Activated CD4-positive, alpha-beta T cell treated with anti-CD3 and anti-CD28 coated beads, Interleukin-2, amount 10 ng/mL, durations not matched to agents 24 days and 14 days (primary cell): ENCODE measurements at regions of chr22 and their contacts with region 1.

Region 1: DNA sequence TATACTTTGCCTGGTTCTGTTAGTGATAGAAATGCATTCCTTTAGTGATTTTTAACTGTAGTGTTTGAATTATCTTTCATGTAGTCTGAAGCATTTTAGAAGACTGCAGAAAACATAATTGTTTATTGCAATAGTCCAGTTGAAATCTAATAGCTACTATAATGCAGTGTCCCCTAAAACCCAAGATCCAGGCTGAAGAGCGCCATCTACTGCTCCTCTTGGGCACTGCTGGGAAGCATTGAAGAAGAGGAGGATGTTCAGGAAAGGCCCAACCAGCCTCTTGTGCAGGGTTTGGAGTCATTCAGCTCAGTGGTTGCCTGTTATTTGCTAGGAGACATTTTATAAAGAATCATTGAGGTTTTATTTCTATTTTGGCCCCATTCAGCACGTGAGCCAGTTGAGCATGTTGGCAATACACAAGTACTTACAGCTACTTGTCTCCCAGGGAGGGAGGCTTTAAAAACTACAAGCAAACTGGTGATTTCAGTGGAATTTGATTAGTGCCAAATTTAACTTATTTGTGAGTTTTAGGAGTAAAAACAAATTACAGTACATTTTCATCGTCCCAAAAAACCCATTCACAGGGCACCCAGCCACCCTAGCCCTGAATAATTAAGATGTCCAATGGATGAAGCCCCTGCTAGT is 74.9 kb upstream of the HORMAD2 start:
- DNase-seq: peak; percentile 90
- H3K4me3 Mint-ChIP-seq: no peak overlapping the region
- H3K27ac Mint-ChIP-seq: no peak overlapping the region
- H3K4me1 Mint-ChIP-seq: peaks cover 10% of the 10 kb centered on the region
- H3K27me3 Mint-ChIP-seq: no peaks in the 10 kb centered on the region

Region 2: DNA sequence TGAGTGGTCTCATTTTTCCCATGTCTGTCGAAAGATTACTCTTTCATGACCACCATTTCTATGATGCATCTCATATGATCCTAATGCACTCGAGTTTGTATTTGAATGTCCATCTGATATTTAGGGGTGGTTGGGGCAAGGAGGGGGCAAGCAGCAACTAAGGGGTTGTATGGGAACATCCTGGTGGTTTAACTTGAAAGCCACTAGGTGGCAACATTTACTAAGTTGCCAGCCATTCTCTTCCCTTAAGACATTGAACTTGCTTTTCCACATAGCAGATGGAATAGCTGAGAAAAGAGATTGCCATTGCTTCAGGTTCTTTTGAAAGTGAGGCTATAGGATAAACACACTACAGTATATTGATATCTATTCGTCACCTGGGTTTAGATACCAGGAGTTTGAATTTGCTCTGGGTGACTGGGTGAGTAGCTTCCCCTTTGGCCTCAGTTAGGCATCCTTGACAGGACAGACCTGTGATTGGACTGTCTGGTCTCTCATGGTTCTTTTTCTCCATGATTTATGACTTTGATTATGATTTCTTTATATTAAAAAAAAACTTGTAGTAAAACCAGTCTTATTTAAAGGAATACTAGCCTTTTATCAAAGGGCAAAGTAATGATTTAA is 369.5 kb before region 1 on chr22:
- intact Hi-C with region 1: loop called (anchors 5 kb)
- DNase-seq: peak; percentile 65
- H3K4me3 Mint-ChIP-seq: no peak overlapping the region
- H3K27ac Mint-ChIP-seq: no peak overlapping the region
- H3K4me1 Mint-ChIP-seq: peaks cover 28% of the 10 kb centered on the region
- H3K27me3 Mint-ChIP-seq: no peaks in the 10 kb centered on the region

Region 3: DNA sequence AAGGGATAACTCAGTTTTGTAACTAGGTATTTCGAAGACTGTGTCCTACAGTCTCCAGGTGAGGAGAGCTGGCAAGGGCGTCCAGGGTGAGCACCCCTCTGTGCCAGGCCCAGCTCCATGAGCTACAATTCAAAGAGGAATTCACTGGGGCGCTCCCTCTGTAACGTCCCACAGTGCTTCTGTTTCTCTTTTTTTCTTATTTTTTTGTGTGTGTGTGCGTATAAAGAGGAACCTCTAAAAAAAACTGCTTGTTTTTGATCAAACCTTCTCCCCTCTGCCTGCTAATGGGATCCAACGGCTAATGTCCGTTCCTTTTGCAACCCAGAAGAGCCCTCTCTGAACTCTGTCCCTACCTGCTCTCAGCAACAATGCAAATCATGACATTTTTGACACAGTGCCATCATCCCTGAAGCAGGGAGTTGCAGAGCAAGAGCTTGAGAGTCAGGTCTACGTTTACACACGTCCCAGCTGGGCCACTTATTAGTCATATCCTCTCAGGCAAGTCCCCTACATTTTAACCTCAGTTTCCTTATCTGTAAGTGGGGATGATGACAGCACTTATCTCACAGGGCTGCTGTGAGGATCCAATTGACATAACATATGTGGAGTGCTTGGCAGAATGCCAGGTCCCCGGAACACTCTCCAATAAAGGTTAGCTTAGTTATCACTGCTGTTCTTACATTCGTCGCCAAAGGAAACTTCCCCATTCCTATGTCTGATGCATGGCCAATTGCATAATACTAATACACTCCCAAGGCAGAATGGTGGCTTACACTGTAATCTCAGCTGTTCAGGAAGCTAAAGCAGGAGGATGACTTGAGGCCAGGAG is 184.2 kb before region 1 on chr22:
- intact Hi-C with region 1: loop called (anchors 5 kb)
- DNase-seq: peak; percentile 78
- H3K4me3 Mint-ChIP-seq: no peak overlapping the region
- H3K27ac Mint-ChIP-seq: peak overlapping the region; percentile 79
- H3K4me1 Mint-ChIP-seq: peaks cover 12% of the 10 kb centered on the region
- H3K27me3 Mint-ChIP-seq: no peaks in the 10 kb centered on the region

Region 4: DNA sequence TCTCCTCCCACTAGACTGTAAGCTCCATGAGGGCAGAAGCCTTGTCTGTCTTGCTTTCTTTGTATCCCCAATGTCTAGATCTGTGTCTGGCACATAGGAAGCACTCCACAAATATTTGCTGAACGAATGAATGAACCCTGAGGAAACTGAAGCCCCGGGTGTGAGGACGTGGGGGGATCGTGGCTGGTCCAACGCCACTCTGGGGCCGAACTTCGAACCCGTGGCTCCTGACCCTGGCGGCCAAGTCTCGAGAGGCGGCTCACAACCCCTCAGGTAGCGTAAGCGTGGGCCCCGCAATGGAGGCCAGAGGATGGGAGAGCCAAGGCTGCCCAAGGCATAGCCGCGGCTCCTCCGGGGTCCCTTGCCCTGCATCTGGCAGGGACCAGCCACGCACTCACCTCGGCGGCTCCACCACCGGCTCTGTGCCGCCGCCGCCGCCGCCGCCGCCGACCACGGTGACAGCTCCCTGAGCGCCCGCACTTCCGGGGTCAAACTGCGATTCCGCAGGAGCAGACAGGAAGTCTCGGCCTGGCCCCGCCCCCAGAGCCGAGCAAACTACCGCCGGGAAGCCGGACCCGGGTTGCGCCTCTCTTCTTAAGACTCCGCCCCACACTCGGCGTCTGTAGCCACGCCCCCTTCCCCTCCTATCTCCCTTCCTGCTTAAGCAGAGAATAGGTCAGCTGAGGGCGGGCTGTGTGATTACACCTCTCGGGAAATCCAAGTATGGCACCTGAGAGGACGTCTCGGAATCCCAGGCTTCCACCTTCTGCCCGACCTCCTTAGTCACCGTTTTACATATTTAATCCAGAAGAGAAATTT is 167.3 kb before region 1 on chr22 and contains the start of gene ASCC2:
- intact Hi-C with region 1: loop called (anchors 5 kb)
- DNase-seq: peak; percentile 100
- H3K4me3 Mint-ChIP-seq: peak within 1 kb of the TSS; percentile 99
- H3K27ac Mint-ChIP-seq: peak within 1 kb of the TSS; percentile 90
- H3K4me1 Mint-ChIP-seq: peaks cover 31% of the 10 kb centered on the region
- H3K27me3 Mint-ChIP-seq: no peaks in the 10 kb centered on the region
- total RNA-seq, gene ASCC2: 78.5 and 81.3 TPM in 2 replicates

Region 5: DNA sequence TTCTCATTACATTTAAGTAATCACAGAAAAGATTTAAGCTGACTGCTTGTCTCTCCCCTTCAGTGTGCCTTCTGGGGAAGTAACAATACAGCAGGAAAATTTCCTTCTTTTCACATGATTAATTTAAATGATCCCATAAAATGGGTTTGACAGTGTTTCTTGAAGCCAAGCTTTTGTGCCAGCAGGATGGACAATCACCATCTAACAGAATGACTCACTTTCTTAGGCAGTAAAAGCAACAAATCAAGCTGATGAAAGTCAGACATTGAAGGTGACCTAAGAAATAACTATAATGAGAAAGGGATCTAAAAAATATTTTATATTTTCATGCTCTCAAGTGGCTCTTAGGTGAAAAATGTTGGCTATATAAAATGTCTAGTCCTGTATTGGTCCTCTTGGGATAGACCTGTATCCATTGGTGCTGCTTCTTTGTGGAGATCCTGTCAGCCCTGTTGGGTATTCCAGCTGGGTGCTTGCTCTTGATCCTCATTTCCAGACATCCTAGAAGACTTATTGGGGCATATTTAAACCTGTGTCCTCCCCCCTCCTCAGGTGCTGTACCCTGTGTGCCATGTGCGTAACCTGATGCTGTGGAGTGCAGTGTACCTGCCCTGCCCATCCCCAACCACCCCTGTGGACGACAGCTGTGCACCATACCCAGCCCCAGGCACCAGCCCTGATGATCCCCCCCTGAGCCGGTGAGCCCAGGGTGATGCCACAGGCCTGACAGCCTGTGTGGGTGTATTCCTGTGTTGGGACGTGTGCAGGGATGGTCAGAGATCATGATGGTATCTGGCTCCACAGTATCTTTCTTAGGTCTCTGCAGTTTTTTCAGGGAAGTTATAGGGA is 12.3 kb after region 1 on chr22:
- intact Hi-C with region 1: no loop called
- DNase-seq: no peak
- H3K4me3 Mint-ChIP-seq: no peak overlapping the region
- H3K27ac Mint-ChIP-seq: no peak overlapping the region
- H3K4me1 Mint-ChIP-seq: peaks cover under 1% of the 10 kb centered on the region
- H3K27me3 Mint-ChIP-seq: no peaks in the 10 kb centered on the region

Region 6: GRCh38 chr22:30027791-30028190 is 22.5 kb after region 1 on chr22:
- intact Hi-C with region 1: no loop called
- DNase-seq: no peak
- H3K4me3 Mint-ChIP-seq: no peak overlapping the region
- H3K27ac Mint-ChIP-seq: no peak overlapping the region
- H3K4me1 Mint-ChIP-seq: peaks cover 14% of the 10 kb centered on the region
- H3K27me3 Mint-ChIP-seq: no peaks in the 10 kb centered on the region

Region 7: DNA sequence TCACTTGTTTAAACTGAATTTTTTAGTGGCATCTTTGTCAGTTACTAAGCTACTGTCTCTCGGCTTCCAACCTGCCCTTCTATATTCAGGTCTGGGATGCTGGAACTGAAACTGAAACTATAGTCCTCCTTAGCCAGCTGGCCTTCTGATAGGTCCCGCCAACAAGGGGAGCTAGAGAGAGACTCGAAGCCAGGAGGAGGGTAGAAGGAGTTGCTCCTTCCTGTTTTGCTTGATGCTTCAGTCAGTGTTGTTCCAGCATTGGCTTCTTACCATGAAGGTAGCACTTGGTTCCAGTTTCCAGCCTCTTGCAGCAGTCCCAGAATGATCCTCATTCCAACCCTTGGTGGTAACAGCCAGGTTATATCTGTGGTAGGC is 42.0 kb after region 1 on chr22:
- intact Hi-C with region 1: loop called (anchors 1 kb)
- DNase-seq: peak; percentile 86
- H3K4me3 Mint-ChIP-seq: peak overlapping the region; percentile 24
- H3K27ac Mint-ChIP-seq: no peak overlapping the region
- H3K4me1 Mint-ChIP-seq: peaks cover 12% of the 10 kb centered on the region
- H3K27me3 Mint-ChIP-seq: no peaks in the 10 kb centered on the region